ENCODE measurements at regions of chr17 and their contacts with region 1.

Region 1: DNA sequence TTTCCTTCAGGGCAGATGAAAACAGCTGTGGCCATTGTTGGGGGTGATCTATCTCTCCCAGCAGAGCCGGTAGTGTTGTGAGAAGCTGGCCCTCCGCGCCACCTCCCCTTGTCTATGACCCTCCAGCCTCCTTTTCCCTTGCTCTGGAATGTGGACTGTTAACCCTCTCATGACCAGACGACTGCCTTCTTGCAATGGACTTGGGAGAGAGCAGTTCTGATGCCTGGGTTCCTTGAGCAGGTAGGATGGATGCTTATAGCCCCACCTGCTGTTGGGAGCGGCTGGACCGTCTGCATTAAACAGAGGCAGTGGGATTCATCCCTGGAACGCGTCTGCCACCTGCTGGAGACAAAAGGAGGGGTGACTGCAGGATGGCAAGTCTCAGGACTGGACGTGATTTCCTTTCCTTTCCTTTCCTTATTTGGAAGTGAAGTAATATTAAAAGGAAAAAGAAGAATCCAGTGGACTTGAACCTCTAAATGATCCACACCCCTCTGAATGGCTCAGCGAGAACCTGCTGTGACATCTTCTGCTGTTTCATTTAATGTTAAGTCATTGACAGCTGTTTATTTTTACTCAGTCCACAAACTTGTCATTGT is 1.8 kb upstream of the SOST start:
- DNase-seq: peak; percentile 85
- H3K4me3 ChIP-seq: peak overlapping the region in 1 of 3 experiments; percentile 5
- H3K27ac ChIP-seq: no peak overlapping the region
- H3K4me1 ChIP-seq: peaks cover 21% of the 10 kb centered on the region
- H3K27me3 ChIP-seq: no peaks in the 10 kb centered on the region
- CTCF ChIP-seq: peak; percentile 100

Region 2: DNA sequence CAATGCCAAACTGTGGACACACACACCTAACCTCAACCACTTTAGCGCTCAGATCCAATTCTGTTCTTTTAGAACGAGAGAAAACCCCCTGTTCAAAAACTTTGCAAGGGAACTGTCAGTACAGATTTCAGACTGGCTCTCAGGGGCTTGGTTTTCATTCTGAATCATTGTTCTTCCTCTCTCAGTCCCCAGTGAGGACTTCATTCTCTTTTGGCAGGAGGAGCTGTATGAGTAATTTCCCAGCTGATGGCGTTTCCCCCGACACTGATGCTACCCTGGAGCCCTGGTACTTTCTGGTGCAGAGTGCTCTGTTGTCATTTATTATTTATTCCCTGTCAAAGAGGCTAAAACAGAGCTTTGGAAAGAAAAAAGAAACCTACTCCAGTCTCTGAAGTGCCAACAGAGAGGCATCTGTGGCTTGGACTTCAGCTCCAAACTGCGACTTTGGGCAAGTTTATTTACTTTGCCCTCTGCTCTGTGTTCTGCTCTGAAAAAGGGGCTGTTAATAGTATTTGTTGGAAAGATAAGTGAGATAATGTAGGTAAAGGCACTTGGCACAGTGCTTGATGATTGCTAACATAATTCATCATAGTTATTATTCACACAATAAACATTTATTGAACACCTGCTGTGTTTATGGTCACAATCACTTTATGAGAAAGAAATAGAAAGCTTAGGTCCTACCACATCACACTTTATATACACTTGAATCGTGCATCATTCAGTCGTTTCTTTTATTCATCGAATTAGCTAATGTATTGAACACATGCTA is 242.6 kb before region 1 on chr17:
- CTCF ChIA-PET with region 1: no interaction called
- dilution Hi-C with region 1: loop called (anchors 5 kb)
- in situ Hi-C with region 1: no loop called
- intact Hi-C with region 1: loop called (anchors 1 kb)
- DNase-seq: peak; percentile 9
- H3K4me3 ChIP-seq: no peak overlapping the region
- H3K27ac ChIP-seq: no peak overlapping the region
- H3K4me1 ChIP-seq: no peaks in the 10 kb centered on the region
- H3K27me3 ChIP-seq: no peaks in the 10 kb centered on the region
- CTCF ChIP-seq: no peak

Region 3: DNA sequence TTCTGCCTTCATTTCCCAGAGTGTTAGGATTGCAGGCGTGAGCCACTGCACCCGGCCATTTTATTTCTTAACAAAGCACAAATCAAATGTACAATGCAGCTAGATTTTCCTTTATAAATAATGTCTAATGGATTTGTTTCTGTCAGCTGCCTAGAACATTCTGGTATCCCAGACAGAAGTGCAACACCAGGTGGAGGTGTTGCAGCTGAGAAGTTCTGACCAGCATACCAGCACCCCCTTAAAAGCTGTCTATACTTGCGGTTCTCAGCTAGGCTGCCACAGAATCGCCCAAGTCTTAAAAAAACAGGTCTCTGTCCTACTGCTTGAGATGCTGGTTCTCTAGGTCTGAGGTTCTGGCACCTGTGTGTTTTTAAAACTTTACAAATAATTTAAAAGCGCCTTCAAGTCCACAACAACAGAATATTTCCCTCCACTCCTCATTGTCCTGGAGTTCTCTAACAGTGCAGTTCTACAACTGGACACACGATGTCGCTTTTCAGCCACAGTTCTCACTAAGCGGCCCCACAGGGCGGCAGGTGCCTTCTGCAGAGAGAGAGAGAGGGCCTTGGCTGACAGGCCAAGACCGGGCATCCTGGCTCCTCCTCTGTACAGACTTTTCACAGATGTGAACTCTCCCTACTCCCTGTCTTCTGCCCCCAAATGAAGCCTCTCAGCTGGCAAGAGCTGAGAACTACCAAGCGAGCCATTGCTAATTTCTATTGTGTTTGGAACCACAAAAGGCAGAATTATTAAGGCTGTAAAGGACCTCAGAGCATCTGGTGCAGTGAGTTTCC is 66.1 kb before region 1 on chr17:
- CTCF ChIA-PET with region 1: interaction called, 10 read pairs
- dilution Hi-C with region 1: no loop called
- in situ Hi-C with region 1: loop called (anchors 5 kb)
- intact Hi-C with region 1: loop called (anchors 1 kb)
- DNase-seq: peak; percentile 74
- H3K4me3 ChIP-seq: no peak overlapping the region
- H3K27ac ChIP-seq: no peak overlapping the region
- H3K4me1 ChIP-seq: no peaks in the 10 kb centered on the region
- H3K27me3 ChIP-seq: no peaks in the 10 kb centered on the region
- CTCF ChIP-seq: peak; percentile 89 to 97

Measured in mammary epithelial cell (primary cell).